ENCODE measurements at regions of chr1 and their contacts with region 1.

Region 1: GRCh38 chr1:216961516-216961915 is 238.3 kb upstream of the ESRRG start:
- DNase-seq: peak; percentile 47
- ATAC-seq: peak; percentile 67
- H3K4me3 ChIP-seq: no peak overlapping the region
- H3K27ac ChIP-seq: no peak overlapping the region
- H3K4me1 ChIP-seq: no peaks in the 10 kb centered on the region
- H3K27me3 ChIP-seq: no peaks in the 10 kb centered on the region
- CTCF ChIP-seq: peak; percentile 76

Region 2: DNA sequence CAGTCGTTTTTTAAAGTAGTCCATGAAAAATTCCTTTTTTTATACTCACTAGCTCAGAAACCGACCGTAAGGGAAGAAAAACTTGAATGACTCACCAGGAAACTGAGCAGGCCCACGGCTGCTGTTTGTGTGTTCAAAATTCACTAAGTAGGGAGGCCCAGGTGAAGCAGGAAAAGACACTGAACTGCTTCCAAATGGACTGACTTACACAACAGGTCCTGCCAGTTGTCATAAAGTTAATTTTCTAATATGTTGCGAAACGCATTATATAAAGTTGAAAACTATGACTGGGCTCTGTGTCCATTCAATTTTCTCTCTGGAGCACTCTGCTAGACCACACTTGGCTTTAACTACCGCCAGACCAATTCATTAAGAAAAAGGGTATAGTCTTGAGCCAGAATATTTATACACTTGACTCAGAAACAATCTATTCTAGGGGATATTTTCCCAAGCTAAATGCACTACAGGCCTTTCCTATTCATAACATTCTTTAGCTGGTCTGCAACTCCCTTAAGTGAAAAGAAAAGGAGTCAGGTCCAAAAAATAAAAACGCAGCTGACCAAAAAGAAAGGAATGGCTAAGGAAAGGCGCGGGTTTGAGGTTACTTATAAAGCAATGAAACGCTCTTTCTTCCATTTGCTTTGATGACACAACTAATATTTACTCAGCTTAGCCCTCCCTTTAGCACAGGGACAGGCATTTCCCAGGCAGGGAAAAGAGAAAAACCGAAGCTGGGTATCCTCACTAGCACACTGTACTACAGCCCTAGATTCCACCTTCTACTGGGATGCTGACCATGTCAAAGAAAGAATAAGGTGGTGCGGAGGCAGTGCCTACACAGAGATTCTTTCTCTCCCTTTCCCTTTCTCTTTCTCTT is 68.0 kb after region 1 on chr1:
- CTCF ChIA-PET with region 1: no interaction called
- POLR2A ChIA-PET with region 1: no interaction called
- intact Hi-C with region 1: loop called (anchors 5 kb)
- DNase-seq: peak; percentile 99
- ATAC-seq: peak; percentile 94
- H3K4me3 ChIP-seq: peak overlapping the region; percentile 55
- H3K27ac ChIP-seq: peak overlapping the region; percentile 91
- H3K4me1 ChIP-seq: peaks cover 46% of the 10 kb centered on the region
- H3K27me3 ChIP-seq: no peaks in the 10 kb centered on the region
- CTCF ChIP-seq: no peak

Region 3: GRCh38 chr1:217230412-217230811 is 268.9 kb after region 1 on chr1:
- CTCF ChIA-PET with region 1: no interaction called
- POLR2A ChIA-PET with region 1: no interaction called
- intact Hi-C with region 1: loop called (anchors 1 kb)
- DNase-seq: no peak
- ATAC-seq: peak; percentile 27; the same call in 1 of the 2 replicates
- H3K4me3 ChIP-seq: no peak overlapping the region
- H3K27ac ChIP-seq: no peak overlapping the region
- H3K4me1 ChIP-seq: no peaks in the 10 kb centered on the region
- H3K27me3 ChIP-seq: no peaks in the 10 kb centered on the region
- CTCF ChIP-seq: no peak

Region 4: DNA sequence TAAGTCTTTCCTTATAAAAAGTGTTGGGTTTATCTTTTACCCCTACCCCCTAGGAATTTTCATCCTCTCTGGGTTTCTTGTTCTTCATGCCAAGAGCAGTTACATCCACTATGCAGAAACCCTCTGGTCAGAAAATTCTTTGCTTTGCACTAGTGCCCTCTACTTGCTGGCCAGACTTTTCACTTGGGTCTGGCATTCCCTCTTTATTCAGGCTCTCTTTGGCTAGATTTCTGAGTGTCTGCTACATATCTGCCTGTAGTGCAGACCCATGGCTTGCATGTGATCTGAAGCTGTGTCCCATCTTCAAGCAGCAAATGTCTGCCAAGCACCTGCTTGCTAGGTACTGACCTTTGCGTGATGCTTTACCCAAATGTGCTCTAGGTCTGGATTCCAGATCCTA is 432.4 kb after region 1 on chr1:
- CTCF ChIA-PET with region 1: no interaction called
- POLR2A ChIA-PET with region 1: no interaction called
- intact Hi-C with region 1: loop called (anchors 2 kb)
- DNase-seq: peak; percentile 52
- ATAC-seq: peak; percentile 86
- H3K4me3 ChIP-seq: no peak overlapping the region
- H3K27ac ChIP-seq: no peak overlapping the region
- H3K4me1 ChIP-seq: no peaks in the 10 kb centered on the region
- H3K27me3 ChIP-seq: no peaks in the 10 kb centered on the region
- CTCF ChIP-seq: peak; percentile 56

Region 5: DNA sequence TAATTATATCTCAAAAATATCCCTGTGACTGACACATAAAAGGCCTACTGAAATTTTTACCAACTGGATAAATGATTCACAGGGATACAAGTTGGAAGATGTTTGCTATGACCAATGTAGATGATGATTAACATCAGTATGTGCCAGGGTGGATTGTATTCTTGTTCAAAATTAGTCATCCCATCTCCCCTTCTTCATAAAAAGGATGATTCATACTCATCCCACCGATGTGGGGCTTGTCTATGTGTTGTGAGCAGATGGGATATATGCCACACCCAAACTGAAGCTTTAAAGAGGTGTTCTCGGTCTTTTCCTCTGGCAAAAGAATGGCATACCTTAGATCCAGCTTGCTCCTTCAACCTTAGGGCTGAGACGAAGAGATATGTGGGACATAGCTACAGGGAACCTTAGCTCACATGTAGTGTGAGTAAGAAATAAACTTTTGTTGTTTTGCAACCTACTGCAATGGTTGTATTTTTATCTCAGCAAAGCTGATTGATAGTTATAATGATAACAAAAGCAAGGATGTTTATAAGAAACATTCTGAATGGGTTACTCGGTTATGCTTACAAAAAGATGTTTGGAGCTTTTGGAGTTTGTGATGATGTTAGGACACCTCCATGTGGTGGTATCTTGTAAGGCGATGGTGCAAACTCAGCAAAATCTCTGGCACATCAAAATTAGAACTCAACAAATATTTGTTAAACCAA is 699.0 kb after region 1 on chr1:
- CTCF ChIA-PET with region 1: no interaction called
- POLR2A ChIA-PET with region 1: no interaction called
- intact Hi-C with region 1: loop called (anchors 1 kb)
- DNase-seq: peak; percentile 98
- ATAC-seq: peak; percentile 93
- H3K4me3 ChIP-seq: peak overlapping the region; percentile 48; the same call in 1 of the 2 replicates
- H3K27ac ChIP-seq: peak overlapping the region; percentile 86
- H3K4me1 ChIP-seq: peaks cover 24% of the 10 kb centered on the region
- H3K27me3 ChIP-seq: no peaks in the 10 kb centered on the region
- CTCF ChIP-seq: peak; percentile 83

Region 6: GRCh38 chr1:218171285-218171893 is 1209.9 kb after region 1 on chr1:
- CTCF ChIA-PET with region 1: interaction called, 3 read pairs
- POLR2A ChIA-PET with region 1: no interaction called
- intact Hi-C with region 1: loop called (anchors 1 kb)
- DNase-seq: peak; percentile 87
- ATAC-seq: peak; percentile 57
- H3K4me3 ChIP-seq: no peak overlapping the region
- H3K27ac ChIP-seq: no peak overlapping the region
- H3K4me1 ChIP-seq: no peaks in the 10 kb centered on the region
- H3K27me3 ChIP-seq: peaks cover 35% of the 10 kb centered on the region
- CTCF ChIP-seq: peak; percentile 99